ENCODE measurements at regions of chr5 and their contacts with region 1.

Region 1: GRCh38 chr5:35777358-35778087 is 79.2 kb upstream of the IL7R start:
- DNase-seq: peak in 3 of 5 donors; percentile 44 to 57 (median 56)
- ATAC-seq: peak in 1 of 4 donors; percentile 42
- H3K4me3 ChIP-seq: no peak overlapping the region
- H3K27ac ChIP-seq: no peak overlapping the region
- H3K4me1 ChIP-seq: peaks cover 0 to 23% (median 7%) of the 10 kb centered on the region in 12 donors
- H3K27me3 ChIP-seq: no peaks in the 10 kb centered on the region
- CTCF ChIP-seq: peak; percentile 30 to 70 (median 58)
- POLR2A ChIP-seq: no peak

Region 2: GRCh38 chr5:35815089-35815936 is 37.8 kb after region 1 on chr5:
- intact Hi-C with region 1: loop called in 2 of 10 experiments (anchors 5 kb)
- DNase-seq: no peak
- ATAC-seq: no peak
- H3K4me3 ChIP-seq: no peak overlapping the region
- H3K27ac ChIP-seq: no peak overlapping the region
- H3K4me1 ChIP-seq: peaks cover 0 to 4% (median 0%) of the 10 kb centered on the region in 12 donors
- H3K27me3 ChIP-seq: no peaks in the 10 kb centered on the region
- CTCF ChIP-seq: peak in 7 of 12 donors; percentile 32 to 47 (median 46)
- POLR2A ChIP-seq: no peak

Region 3: GRCh38 chr5:35852084-35852734 is 74.7 kb after region 1 on chr5:
- intact Hi-C with region 1: loop called in 1 of 10 experiments (anchors 5 kb)
- DNase-seq: no peak
- ATAC-seq: no peak
- H3K4me3 ChIP-seq: no peak overlapping the region
- H3K27ac ChIP-seq: peak overlapping the region in 1 of 12 donors; percentile 85
- H3K4me1 ChIP-seq: peaks cover 0 to 49% (median 0%) of the 10 kb centered on the region in 12 donors
- H3K27me3 ChIP-seq: no peaks in the 10 kb centered on the region
- CTCF ChIP-seq: no peak
- POLR2A ChIP-seq: no peak

Measured in heart left ventricle (tissue), 16 donors.